Activated CD8-positive, alpha-beta T cell treated with anti-CD3 and anti-CD28 coated beads for 36 hours (primary cell): ENCODE measurements at regions of chr15 and their contacts with region 1.

Region 1: DNA sequence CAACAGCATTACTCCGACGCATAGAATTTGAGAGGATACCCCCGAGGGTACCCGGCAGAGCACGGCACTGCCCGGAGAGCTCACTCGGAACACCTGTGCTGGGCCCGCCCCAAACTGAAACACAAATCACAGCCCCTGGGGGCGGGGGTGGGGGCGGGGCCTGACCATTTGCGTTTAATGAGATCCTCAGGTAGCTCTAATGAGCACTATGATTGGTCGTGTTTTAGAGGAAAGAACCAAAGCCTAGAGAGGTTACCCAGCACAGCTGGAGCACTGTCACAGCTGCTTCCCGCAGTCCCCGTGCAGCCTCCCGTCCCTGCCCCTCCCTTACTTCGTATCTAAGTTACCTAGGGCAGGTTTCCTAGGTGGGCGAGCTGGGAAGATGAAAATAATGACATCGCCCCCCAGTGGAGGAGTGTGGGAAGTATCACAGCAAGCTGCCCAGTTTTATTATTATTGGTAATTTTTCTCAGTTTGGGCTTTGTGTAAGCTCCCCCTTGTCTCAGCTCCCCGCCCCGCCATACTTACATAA is 187.1 kb downstream of the PDE8A start:
- DNase-seq: peak; percentile 73
- ATAC-seq: peak; percentile 75
- H3K4me3 Mint-ChIP-seq: peak overlapping the region; percentile 8
- H3K27ac Mint-ChIP-seq: no peak overlapping the region
- H3K4me1 Mint-ChIP-seq: peaks cover 2% of the 10 kb centered on the region
- H3K27me3 Mint-ChIP-seq: peaks cover 27% of the 10 kb centered on the region
- CTCF ChIP-seq: peak; percentile 65

Region 2: GRCh38 chr15:84685304-84685703 is 483.4 kb before region 1 on chr15:
- CTCF ChIA-PET with region 1: no interaction called
- POLR2A ChIA-PET with region 1: no interaction called
- intact Hi-C with region 1: no loop called
- DNase-seq: no peak
- ATAC-seq: no peak
- H3K4me3 Mint-ChIP-seq: no peak overlapping the region
- H3K27ac Mint-ChIP-seq: no peak overlapping the region
- H3K4me1 Mint-ChIP-seq: peaks cover 16% of the 10 kb centered on the region
- H3K27me3 Mint-ChIP-seq: no peaks in the 10 kb centered on the region
- CTCF ChIP-seq: no peak

Region 3: DNA sequence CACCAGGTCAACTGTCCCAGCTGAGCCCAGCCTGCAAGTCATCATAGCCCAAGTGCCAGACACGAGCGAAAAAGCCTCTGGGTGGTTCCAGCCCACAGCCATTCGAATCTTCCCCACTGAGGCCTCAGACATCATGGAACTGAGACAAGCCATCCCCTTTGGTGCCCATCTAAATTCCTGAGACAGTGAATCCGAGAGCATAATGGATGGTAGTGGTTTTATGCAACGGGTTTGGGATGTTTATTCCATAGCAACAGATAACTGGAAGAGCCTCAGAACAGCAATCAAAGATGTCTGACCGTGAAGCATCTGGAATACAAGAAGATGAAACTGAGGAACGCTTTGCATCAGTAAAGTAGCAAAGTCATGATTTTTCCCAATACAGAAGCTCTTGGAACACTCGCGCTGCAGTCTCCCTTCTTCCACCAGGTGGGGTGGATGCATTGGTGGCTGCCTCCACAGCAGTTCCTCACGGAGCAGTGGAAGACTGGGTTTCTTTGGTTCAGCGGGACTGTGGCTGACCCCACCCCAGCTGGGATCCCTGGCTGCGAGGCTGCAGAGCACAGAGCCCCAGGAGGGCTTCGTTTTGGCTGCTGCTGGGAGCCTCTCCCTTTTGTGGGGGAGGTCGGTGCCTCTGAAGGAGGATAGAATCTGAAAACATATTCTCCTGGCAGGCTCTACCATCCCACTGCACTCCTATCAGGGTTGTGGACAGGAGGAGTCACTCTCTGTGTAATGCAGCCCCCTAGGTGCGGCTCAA is 213.4 kb before region 1 on chr15:
- CTCF ChIA-PET with region 1: interaction called, 4 read pairs
- POLR2A ChIA-PET with region 1: interaction called, 4 read pairs
- intact Hi-C with region 1: loop called (anchors 10 kb)
- DNase-seq: peak; percentile 52
- ATAC-seq: peak; percentile 37
- H3K4me3 Mint-ChIP-seq: no peak overlapping the region
- H3K27ac Mint-ChIP-seq: no peak overlapping the region
- H3K4me1 Mint-ChIP-seq: peaks cover 9% of the 10 kb centered on the region
- H3K27me3 Mint-ChIP-seq: peaks cover 11% of the 10 kb centered on the region
- CTCF ChIP-seq: peak; percentile 57

Region 4: DNA sequence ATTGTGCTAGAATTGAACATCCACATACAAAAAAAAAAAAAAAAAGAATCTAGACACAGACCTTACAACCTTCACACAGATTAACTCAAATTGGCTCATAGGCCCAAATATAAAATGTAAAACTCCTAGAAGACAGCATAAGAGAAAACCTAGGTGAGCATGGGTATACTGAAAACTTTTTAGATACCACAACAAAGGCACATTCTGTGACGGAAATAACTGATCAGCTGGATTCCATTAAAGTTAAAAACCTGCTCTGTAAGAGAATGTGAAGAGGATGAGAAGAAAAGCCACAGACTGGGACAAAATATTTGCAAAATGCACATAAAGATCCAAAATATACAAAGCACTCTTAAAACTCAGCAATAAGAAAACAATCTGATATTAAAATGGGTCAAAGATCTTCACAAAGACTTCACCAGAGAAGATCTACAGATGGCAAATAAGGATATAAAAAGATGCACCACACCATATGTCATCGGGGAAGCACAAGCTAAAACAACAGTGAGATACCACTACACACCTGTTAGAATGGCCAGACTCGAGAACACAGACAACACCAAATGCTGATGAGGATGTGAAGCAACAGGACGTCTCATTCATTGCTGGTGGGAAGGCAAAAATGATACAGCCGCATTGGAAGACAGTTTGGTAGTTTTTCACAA is 19.1 kb before region 1 on chr15:
- CTCF ChIA-PET with region 1: interaction called, 11 read pairs
- POLR2A ChIA-PET with region 1: no interaction called
- intact Hi-C with region 1: no loop called
- DNase-seq: no peak
- ATAC-seq: peak; percentile 45
- H3K4me3 Mint-ChIP-seq: no peak overlapping the region
- H3K27ac Mint-ChIP-seq: no peak overlapping the region
- H3K4me1 Mint-ChIP-seq: peaks cover 23% of the 10 kb centered on the region
- H3K27me3 Mint-ChIP-seq: peaks cover 3% of the 10 kb centered on the region
- CTCF ChIP-seq: no peak

Region 5: GRCh38 chr15:85179700-85180099 is 11.0 kb after region 1 on chr15:
- CTCF ChIA-PET with region 1: interaction called, 11 read pairs
- POLR2A ChIA-PET with region 1: no interaction called
- intact Hi-C with region 1: no loop called
- DNase-seq: no peak
- ATAC-seq: no peak
- H3K4me3 Mint-ChIP-seq: no peak overlapping the region
- H3K27ac Mint-ChIP-seq: no peak overlapping the region
- H3K4me1 Mint-ChIP-seq: no peaks in the 10 kb centered on the region
- H3K27me3 Mint-ChIP-seq: peaks cover 3% of the 10 kb centered on the region
- CTCF ChIP-seq: no peak